A549 (cell line): ENCODE measurements at regions of chr11 and their contacts with region 1.

Region 1: DNA sequence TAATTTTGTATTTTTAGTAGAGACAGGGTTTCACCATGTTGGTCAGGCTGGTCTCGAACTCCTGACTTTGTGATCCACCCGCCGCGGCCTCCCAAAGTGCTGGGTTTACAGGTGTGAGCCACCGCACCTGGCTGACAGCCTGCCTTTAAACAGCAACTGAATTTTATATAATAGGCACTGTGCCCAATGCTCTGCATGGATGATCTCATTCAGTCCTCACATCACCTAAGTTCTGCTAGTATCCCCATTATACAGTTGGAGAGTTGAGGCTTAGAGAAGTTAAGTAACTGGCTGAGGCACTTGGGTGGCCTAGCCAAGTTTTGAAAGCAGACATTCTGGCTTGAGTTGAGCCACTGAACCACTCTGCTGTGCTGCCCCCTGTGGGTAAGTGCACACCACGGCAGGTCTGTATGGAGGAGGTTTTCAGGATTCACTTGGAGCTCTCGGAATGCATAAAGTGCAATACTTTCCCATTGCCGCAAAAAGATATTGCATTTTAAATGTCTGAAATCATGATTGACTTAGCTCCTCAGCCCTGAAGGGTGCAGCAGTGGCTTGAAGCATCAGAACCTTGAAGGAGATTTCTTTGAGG is 112.4 kb downstream of the LDLRAD3 start:
- DNase-seq: peak; percentile 25 to 38
- ATAC-seq: peak; percentile 66 to 80; a peak in 5 of 6 replicates
- H3K4me3 ChIP-seq: no peak overlapping the region
- H3K27ac ChIP-seq: no peak overlapping the region
- H3K4me1 ChIP-seq: no peaks in the 10 kb centered on the region
- CTCF ChIP-seq: peak; percentile 41
- EP300 ChIP-seq: no peak
- POLR2A ChIP-seq: no peak
- RAD21 ChIP-seq: peak; percentile 48 to 56; a peak in 4 of 5 replicates

Region 2: GRCh38 chr11:35702126-35702525 is 354.1 kb before region 1 on chr11:
- CTCF ChIA-PET with region 1: no interaction called
- POLR2A ChIA-PET with region 1: no interaction called
- DNase-seq: no peak
- ATAC-seq: no peak
- H3K4me3 ChIP-seq: no peak overlapping the region
- H3K27ac ChIP-seq: no peak overlapping the region
- H3K4me1 ChIP-seq: no peaks in the 10 kb centered on the region
- CTCF ChIP-seq: no peak
- EP300 ChIP-seq: no peak
- POLR2A ChIP-seq: no peak
- RAD21 ChIP-seq: no peak

Region 3: GRCh38 chr11:36012455-36012854 is 43.8 kb before region 1 on chr11:
- CTCF ChIA-PET with region 1: no interaction called
- POLR2A ChIA-PET with region 1: no interaction called
- DNase-seq: peak in 1 of 2 experiments; percentile 10
- ATAC-seq: peak; percentile 74 to 83; a peak in 5 of 6 replicates
- H3K4me3 ChIP-seq: no peak overlapping the region
- H3K27ac ChIP-seq: peak overlapping the region; percentile 18 to 35; a peak in 2 of 6 replicates
- H3K4me1 ChIP-seq: peaks cover 40% of the 10 kb centered on the region
- CTCF ChIP-seq: no peak
- EP300 ChIP-seq: no peak
- POLR2A ChIP-seq: no peak
- RAD21 ChIP-seq: no peak

Region 4: DNA sequence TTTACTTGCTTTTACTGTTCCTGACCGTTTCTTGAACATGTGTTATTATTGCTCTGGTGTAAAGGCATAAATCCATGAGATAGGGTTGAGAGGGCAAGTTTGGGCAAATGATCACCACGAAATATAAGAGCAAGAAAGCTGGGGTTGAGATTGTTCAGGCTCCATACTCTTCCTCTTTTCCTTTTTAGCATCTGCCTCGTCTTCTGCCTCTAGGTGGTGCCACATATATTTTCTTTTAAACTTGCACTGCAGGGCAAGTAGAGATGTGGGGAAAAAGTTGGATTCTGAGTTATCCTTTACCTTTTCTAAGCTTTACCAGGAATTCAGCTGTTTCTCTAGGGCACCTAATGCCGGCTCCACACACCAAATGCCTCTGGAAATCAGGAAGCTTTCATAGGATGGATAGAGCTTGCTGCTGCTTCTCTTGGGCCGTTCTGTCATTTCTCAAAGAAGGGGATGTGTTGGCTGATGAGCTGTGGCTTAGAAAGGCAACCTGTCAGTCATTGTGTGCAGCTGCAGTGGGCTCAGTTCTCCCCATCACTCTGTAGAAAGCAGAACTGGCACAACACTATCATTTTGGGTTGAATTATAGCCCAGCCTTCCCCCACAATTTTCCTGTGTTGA is 14.2 kb before region 1 on chr11:
- CTCF ChIA-PET with region 1: interaction called, 11 read pairs
- POLR2A ChIA-PET with region 1: no interaction called
- DNase-seq: peak in 1 of 2 experiments; percentile 8
- ATAC-seq: peak; percentile 64 to 71; a peak in 4 of 6 replicates
- H3K4me3 ChIP-seq: no peak overlapping the region
- H3K27ac ChIP-seq: no peak overlapping the region
- H3K4me1 ChIP-seq: peaks cover 3% of the 10 kb centered on the region; the same call in 2 of the 3 replicates
- CTCF ChIP-seq: peak; percentile 65
- EP300 ChIP-seq: no peak
- POLR2A ChIP-seq: no peak
- RAD21 ChIP-seq: peak; percentile 48 to 60; a peak in 4 of 5 replicates

Region 5: GRCh38 chr11:36073411-36074203 is 17.4 kb after region 1 on chr11:
- CTCF ChIA-PET with region 1: interaction called, 11 read pairs
- POLR2A ChIA-PET with region 1: no interaction called
- DNase-seq: no peak
- ATAC-seq: no peak
- H3K4me3 ChIP-seq: no peak overlapping the region
- H3K27ac ChIP-seq: no peak overlapping the region
- H3K4me1 ChIP-seq: no peaks in the 10 kb centered on the region
- CTCF ChIP-seq: no peak
- EP300 ChIP-seq: no peak
- POLR2A ChIP-seq: no peak
- RAD21 ChIP-seq: no peak